Colonic mucosa (tissue), 4 donors: ENCODE measurements at regions of chr2 and their contacts with region 1.

Region 1: DNA sequence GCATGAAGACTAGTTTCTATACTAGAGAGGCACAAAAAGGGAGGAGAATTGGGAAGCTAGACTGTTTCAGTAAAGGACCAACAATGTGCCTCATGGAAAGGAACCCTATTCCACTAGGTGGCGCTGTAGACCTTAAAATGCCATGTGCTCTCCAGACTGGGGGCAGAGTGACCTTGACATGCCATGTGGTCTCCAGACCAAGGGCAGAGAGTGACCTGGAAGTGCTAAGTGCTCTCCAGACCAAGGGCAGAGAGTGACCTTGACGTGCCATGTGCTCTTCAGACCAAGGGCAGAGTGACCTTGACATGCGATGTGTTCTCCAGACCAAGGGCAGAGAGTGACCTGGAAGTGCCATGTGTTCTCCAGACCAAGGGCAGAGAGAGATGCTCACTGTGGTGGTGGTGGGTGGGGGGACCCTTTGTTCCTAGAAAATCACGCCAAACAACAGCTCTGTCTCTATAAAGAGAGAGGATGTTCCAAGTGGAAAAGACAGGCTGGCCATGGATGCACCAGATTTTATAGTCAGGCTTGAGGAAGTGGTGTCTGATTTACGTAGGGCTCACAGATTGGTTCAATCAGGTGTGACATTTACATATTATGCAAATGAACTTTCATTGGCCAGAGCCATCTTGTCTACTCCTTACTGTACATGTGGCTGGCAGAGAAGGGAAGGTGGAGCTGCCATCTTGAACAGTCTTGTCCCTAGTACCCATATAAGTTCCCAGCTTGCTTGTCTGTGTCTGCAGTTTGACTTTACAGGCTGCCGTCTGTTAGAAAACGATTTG is 344.0 kb upstream of the DDX18 start:
- DNase-seq: peak; percentile 49
- H3K4me3 ChIP-seq: no peak overlapping the region
- H3K27ac ChIP-seq: no peak overlapping the region
- H3K4me1 ChIP-seq: no peaks in the 10 kb centered on the region
- H3K27me3 ChIP-seq: no peaks in the 10 kb centered on the region
- CTCF ChIP-seq: peak; percentile 47

Region 2: GRCh38 chr2:117170897-117171296 is 299.6 kb before region 1 on chr2:
- intact Hi-C with region 1: no loop called
- DNase-seq: no peak
- H3K4me3 ChIP-seq: no peak overlapping the region
- H3K27ac ChIP-seq: no peak overlapping the region
- H3K4me1 ChIP-seq: no peaks in the 10 kb centered on the region
- H3K27me3 ChIP-seq: no peaks in the 10 kb centered on the region
- CTCF ChIP-seq: no peak

Region 3: GRCh38 chr2:117536139-117536538 is 65.6 kb after region 1 on chr2:
- intact Hi-C with region 1: loop called (anchors 5 kb)
- DNase-seq: no peak
- H3K4me3 ChIP-seq: no peak overlapping the region
- H3K27ac ChIP-seq: no peak overlapping the region
- H3K4me1 ChIP-seq: no peaks in the 10 kb centered on the region
- H3K27me3 ChIP-seq: no peaks in the 10 kb centered on the region
- CTCF ChIP-seq: peak; percentile 46

Region 4: GRCh38 chr2:117771969-117772630 is 301.6 kb after region 1 on chr2:
- intact Hi-C with region 1: loop called (anchors 5 kb)
- DNase-seq: no peak
- H3K4me3 ChIP-seq: no peak overlapping the region
- H3K27ac ChIP-seq: no peak overlapping the region
- H3K4me1 ChIP-seq: no peaks in the 10 kb centered on the region
- H3K27me3 ChIP-seq: no peaks in the 10 kb centered on the region
- CTCF ChIP-seq: no peak

Region 5: DNA sequence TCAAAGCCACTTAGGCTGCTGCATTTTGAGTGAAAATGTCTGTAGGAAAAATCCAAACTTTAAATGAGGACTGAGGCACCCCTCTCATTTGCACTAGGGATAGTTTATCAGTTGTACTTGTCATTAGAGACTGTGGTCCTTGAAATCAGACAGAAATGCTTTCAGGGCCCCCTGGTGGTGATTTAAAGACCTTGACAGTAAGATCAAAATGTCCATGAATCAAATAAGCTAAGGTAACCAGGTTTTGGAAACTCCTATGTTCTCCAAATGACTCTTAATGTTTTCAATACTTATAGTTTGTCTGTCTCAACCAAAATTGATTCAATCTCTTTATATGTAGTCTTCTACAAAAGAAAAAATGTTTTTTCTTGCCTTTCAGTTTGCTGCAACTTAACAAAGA is 315.2 kb after region 1 on chr2:
- intact Hi-C with region 1: loop called (anchors 5 kb)
- DNase-seq: peak; percentile 41
- H3K4me3 ChIP-seq: no peak overlapping the region
- H3K27ac ChIP-seq: no peak overlapping the region
- H3K4me1 ChIP-seq: no peaks in the 10 kb centered on the region
- H3K27me3 ChIP-seq: no peaks in the 10 kb centered on the region
- CTCF ChIP-seq: peak; percentile 43